ENCODE measurements at regions of chr14 and their contacts with region 1.

Region 1: DNA sequence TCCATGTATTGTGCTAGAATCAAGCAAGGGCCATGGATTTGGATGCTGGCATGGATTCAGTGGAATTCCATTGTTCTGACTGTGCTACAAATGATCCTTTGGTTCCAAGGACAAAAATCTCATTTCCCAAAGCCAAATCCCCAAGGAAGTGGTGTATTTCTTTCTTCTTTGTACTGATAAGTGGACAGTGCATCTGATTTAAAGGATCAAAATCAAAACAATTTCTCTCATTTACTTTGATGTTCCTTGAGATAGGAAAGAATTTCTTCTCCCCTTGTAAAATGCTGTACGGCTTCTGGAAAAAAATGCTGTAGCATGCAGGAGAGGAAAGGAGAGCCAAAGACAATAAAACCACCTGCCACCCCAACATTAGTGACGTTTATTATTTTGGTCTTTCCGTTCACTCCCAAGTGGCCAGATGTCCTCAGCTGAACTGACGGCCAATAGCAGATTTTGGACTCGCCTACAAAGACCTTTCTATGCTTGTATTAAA is 185.7 kb downstream of the PRKD1 start:
- DNase-seq: no peak
- H3K4me3 Mint-ChIP-seq: no peak overlapping the region
- H3K27ac Mint-ChIP-seq: no peak overlapping the region
- H3K4me1 Mint-ChIP-seq: peaks cover 51% of the 10 kb centered on the region
- H3K27me3 Mint-ChIP-seq: no peaks in the 10 kb centered on the region
- CTCF ChIP-seq: no peak

Region 2: GRCh38 chr14:29805415-29806123 is 63.6 kb after region 1 on chr14:
- CTCF ChIA-PET with region 1: no interaction called
- intact Hi-C with region 1: no loop called
- DNase-seq: peak; percentile 59
- H3K4me3 Mint-ChIP-seq: peak overlapping the region; percentile 10
- H3K27ac Mint-ChIP-seq: peak overlapping the region; percentile 98
- H3K4me1 Mint-ChIP-seq: peaks cover 28% of the 10 kb centered on the region
- H3K27me3 Mint-ChIP-seq: no peaks in the 10 kb centered on the region
- CTCF ChIP-seq: no peak

Region 3: DNA sequence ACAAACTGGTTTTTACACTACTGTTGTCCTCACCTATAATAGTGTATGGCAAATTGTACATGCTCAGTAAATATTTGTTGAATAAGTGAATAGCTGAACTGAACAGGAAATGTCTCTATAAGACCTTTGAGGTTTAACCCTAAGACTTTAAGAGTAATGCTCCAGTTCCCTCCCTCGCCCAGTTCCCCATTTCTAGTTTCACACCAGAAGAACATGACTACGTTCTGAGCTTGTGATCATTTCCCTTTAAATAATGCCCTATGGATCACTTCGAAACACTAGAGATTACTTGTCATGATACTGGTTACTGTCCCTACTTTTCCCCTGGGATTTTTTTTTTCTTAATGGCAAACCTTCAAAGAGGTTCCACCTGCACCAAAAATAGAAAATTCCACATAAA is 116.3 kb after region 1 on chr14:
- CTCF ChIA-PET with region 1: no interaction called
- intact Hi-C with region 1: loop called (anchors 10 kb)
- DNase-seq: no peak
- H3K4me3 Mint-ChIP-seq: no peak overlapping the region
- H3K27ac Mint-ChIP-seq: no peak overlapping the region
- H3K4me1 Mint-ChIP-seq: no peaks in the 10 kb centered on the region
- H3K27me3 Mint-ChIP-seq: no peaks in the 10 kb centered on the region
- CTCF ChIP-seq: no peak